Heart right ventricle (tissue), 16 donors: ENCODE measurements at regions of chr14 and their contacts with region 1.

Region 1: GRCh38 chr14:98189062-98189461 is 1082.9 kb downstream of the BCL11B start:
- DNase-seq: no peak
- ATAC-seq: no peak
- H3K4me3 ChIP-seq: peak overlapping the region in 1 of 10 donors; percentile 13
- H3K27ac ChIP-seq: peak overlapping the region in 1 of 10 donors; percentile 88
- H3K4me1 ChIP-seq: peaks cover 0 to 3% (median 0%) of the 10 kb centered on the region in 9 donors
- H3K27me3 ChIP-seq: peaks cover 0 to 12% (median 0%) of the 10 kb centered on the region in 7 donors
- CTCF ChIP-seq: no peak

Region 2: DNA sequence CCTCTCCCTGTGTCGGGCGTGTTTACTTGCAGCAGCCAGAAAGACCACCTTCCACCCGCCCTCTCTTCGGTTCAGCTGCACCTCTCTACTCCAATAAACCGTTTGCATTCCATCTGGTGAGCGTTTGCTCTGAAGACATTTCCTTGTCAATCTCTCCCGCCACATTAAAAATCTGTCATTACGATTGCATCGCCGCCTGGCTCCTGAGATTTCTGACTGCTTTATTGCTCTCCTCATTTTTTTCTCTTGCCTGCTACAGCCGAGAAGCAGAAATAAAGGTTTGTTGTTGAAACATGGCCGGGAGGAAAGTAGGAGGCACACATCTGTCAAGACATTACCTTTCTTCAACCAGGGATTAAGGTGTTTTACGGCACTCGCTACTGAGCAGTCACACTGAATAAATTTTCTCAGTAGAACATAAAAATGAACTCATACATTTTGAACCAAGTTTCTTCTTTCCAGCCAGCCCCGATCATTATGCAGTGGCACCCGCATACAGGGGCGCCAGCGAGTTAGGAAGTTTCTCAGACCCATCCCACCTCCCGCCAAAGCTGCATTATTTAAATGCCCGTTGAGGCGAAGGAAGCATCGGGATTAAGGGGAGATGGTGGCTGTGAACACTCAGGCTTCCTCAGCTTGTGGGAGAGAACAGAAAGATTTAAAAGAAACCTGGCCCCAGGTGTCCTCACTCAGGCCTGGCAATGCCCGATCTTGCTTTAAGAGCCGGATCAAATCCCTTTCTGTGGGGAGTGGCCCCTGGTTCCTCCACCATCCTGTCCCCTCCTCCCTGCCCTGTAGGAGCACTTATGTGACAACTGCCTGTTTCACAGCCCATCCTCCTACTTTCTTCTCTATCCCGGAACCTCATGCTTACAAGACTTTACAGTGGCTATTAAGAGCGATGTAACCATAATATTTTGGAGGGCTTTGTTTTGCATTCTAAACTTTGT is 25.9 kb before region 1 on chr14:
- intact Hi-C with region 1: loop called in 1 of 10 experiments (anchors 1 kb)
- DNase-seq: no peak
- ATAC-seq: no peak
- H3K4me3 ChIP-seq: no peak overlapping the region
- H3K27ac ChIP-seq: no peak overlapping the region
- H3K4me1 ChIP-seq: no peaks in the 10 kb centered on the region
- H3K27me3 ChIP-seq: peaks cover 0 to 31% (median 9%) of the 10 kb centered on the region in 7 donors
- CTCF ChIP-seq: no peak